CD8-positive, alpha-beta T cell (primary cell): ENCODE measurements at regions of chr2 and their contacts with region 1.

Region 1: DNA sequence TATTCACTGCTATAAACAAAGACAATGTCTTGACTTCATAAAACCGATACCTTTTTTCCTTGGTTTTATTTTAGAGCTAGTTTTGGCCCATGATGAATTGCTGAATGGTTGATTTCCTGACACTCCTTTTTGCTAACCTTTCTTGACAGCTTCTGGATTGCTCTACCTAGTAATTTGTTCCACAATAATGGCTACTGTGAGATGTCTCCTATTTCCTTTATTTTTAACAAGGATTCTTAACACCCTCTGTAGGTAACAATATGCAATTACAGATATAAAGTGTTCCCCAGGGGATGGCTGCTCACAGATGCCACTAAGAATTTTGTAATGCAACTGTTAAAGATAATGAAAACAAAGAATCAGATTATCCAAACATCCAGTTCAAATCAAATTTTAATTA is 100.8 kb upstream of the ATP5MC3 start:
- DNase-seq: peak in 2 of 9 experiments; percentile 23 to 38
- ATAC-seq: peak; percentile 48
- H3K4me3 ChIP-seq: no peak overlapping the region
- H3K4me3 Mint-ChIP-seq: no peak overlapping the region
- H3K27ac ChIP-seq: no peak overlapping the region
- H3K27ac Mint-ChIP-seq: no peak overlapping the region
- H3K4me1 ChIP-seq: no peaks in the 10 kb centered on the region
- H3K4me1 Mint-ChIP-seq: no peaks in the 10 kb centered on the region
- H3K27me3 ChIP-seq: no peaks in the 10 kb centered on the region
- H3K27me3 Mint-ChIP-seq: no peaks in the 10 kb centered on the region
- CTCF ChIP-seq: peak; percentile 35

Region 2: DNA sequence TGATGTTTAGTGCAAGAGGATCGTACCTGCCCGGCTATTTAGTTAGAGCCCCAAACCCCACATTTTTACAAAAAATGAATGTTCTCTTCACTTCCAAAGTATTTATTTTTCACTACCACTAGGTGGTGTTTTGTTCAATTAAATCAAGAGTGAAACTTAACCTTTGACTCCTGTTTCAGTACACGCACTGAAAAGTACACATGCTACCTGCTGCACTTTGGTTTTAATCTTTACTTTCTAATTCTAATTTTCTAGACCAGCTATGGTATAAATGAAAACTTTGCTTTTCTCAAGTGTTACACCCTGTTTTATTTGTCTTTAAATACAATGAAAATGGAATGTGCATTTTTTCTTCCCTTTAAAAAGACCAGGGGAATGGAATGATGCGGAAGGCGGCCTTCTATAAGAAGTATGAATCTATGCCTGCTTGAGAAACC is 245.7 kb before region 1 on chr2:
- CTCF ChIA-PET with region 1: no interaction called
- POLR2A ChIA-PET with region 1: no interaction called
- intact Hi-C with region 1: loop called in 1 of 2 experiments (anchors 5 kb)
- DNase-seq: peak in 2 of 9 experiments; percentile 46 to 64
- ATAC-seq: peak; percentile 75
- H3K4me3 ChIP-seq: no peak overlapping the region
- H3K4me3 Mint-ChIP-seq: peak overlapping the region; percentile 70
- H3K27ac ChIP-seq: no peak overlapping the region
- H3K27ac Mint-ChIP-seq: no peak overlapping the region
- H3K4me1 ChIP-seq: no peaks in the 10 kb centered on the region
- H3K4me1 Mint-ChIP-seq: peaks cover 10% of the 10 kb centered on the region
- H3K27me3 ChIP-seq: no peaks in the 10 kb centered on the region
- H3K27me3 Mint-ChIP-seq: no peaks in the 10 kb centered on the region
- CTCF ChIP-seq: peak; percentile 55

Region 3: GRCh38 chr2:175111200-175111657 is 171.1 kb before region 1 on chr2:
- CTCF ChIA-PET with region 1: no interaction called
- POLR2A ChIA-PET with region 1: no interaction called
- intact Hi-C with region 1: loop called (anchors 1 to 5 kb)
- DNase-seq: peak in 2 of 9 experiments; percentile 53 to 67
- ATAC-seq: peak; percentile 72
- H3K4me3 ChIP-seq: no peak overlapping the region
- H3K4me3 Mint-ChIP-seq: no peak overlapping the region
- H3K27ac ChIP-seq: no peak overlapping the region
- H3K27ac Mint-ChIP-seq: peak overlapping the region; percentile 33
- H3K4me1 ChIP-seq: no peaks in the 10 kb centered on the region
- H3K4me1 Mint-ChIP-seq: no peaks in the 10 kb centered on the region
- H3K27me3 ChIP-seq: no peaks in the 10 kb centered on the region
- H3K27me3 Mint-ChIP-seq: no peaks in the 10 kb centered on the region
- CTCF ChIP-seq: peak; percentile 97

Region 4: DNA sequence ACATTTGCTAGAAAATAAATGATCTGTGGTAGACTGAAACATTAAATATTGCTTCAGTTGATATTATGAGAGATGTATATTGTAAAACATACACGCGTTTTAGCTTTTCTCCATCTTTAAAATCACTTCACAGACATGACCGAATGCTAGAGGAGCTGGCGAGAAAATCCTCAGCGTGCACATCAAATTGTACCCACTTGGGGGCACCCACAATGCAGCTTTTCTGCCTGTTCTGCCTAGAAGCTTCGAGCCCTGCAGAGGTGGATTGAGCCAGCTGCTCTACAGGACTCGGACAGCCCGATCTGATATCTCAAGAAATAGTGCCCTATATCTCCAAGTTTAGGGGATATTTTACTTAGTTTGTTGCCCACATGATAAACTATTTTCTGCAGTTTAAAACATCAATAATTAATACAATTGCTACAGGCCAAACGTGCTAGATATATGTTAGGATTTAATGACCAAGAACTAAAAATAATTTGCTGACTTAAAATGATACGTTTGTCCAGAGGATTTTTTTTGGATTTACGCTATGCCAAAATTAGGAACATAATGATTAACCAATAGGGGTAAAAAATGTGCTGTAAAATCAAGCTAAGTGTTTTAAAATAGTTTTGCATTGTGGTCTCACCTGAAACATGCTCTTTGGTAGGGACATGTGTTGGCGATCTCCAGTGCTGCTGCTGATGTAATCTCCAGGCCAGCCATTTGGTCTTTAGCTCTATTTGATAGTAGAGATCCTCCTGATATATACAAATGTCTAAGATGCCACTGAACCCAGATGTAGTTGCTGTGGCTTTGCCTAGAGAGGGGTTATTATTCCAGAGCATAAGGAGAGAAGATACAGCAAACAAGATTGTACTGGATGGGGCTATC is 78.4 kb before region 1 on chr2:
- CTCF ChIA-PET with region 1: no interaction called
- POLR2A ChIA-PET with region 1: no interaction called
- intact Hi-C with region 1: loop called in 1 of 2 experiments (anchors 5 kb)
- DNase-seq: peak; percentile 4 to 65 (median 41)
- ATAC-seq: peak; percentile 57
- H3K4me3 ChIP-seq: no peak overlapping the region
- H3K4me3 Mint-ChIP-seq: no peak overlapping the region
- H3K27ac ChIP-seq: no peak overlapping the region
- H3K27ac Mint-ChIP-seq: no peak overlapping the region
- H3K4me1 ChIP-seq: no peaks in the 10 kb centered on the region
- H3K4me1 Mint-ChIP-seq: peaks cover 4% of the 10 kb centered on the region
- H3K27me3 ChIP-seq: no peaks in the 10 kb centered on the region
- H3K27me3 Mint-ChIP-seq: peaks cover 15% of the 10 kb centered on the region
- CTCF ChIP-seq: peak; percentile 32